Sigmoid colon (tissue), 7 donors: ENCODE measurements at regions of chr2 and their contacts with region 1.

Region 1: GRCh38 chr2:18749912-18750526 is 160.7 kb upstream of the NT5C1B start:
- DNase-seq: peak; percentile 77
- H3K4me3 ChIP-seq: no peak overlapping the region
- H3K27ac ChIP-seq: no peak overlapping the region
- H3K4me1 ChIP-seq: peaks cover 0 to 11% (median 5%) of the 10 kb centered on the region in 4 donors
- H3K27me3 ChIP-seq: no peaks in the 10 kb centered on the region
- CTCF ChIP-seq: peak; percentile 53 to 84 (median 72)
- EP300 ChIP-seq: no peak
- POLR2A ChIP-seq: no peak

Region 2: DNA sequence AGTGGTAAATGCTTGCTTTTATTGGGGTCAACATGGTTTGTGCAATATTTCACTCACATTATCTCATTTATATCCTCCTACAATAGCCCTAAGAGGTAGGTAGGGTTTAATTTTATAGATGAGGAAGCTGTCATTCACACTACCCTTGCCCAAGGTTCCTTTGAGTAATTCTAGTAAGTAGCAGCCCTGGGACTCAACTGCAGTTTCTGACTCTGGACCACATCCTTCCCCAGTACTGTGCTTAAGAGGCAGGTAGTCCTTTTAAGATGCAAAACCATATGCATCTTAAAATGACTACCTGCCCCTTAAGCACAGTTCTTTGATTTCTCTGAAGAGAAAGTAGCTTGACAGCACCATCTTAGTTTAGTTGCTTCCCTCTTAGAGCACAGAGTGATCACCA is 144.9 kb before region 1 on chr2:
- intact Hi-C with region 1: no loop called
- DNase-seq: no peak
- H3K4me3 ChIP-seq: no peak overlapping the region
- H3K27ac ChIP-seq: no peak overlapping the region
- H3K4me1 ChIP-seq: peaks cover 0 to 12% (median 10%) of the 10 kb centered on the region in 4 donors
- H3K27me3 ChIP-seq: no peaks in the 10 kb centered on the region
- CTCF ChIP-seq: no peak
- EP300 ChIP-seq: no peak
- POLR2A ChIP-seq: no peak

Region 3: DNA sequence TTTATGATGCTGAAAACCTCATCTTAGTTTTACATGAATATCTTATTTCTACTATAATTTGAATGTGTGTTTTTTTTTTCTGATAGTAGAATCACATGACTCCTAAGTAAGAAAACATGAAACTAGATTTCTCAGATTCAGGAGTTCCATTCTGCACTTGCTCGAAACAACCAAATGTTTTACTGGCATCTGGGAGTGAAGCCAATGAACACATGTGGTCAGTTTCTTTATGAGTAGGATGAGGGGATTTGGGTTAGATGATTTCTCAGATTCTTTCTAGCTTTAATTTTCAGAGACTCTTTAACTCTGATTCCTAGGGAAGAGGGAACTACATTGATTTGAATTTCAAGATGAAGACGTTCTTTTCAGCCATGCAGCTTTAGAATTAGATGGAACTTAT is 64.4 kb after region 1 on chr2:
- intact Hi-C with region 1: no loop called
- DNase-seq: no peak
- H3K4me3 ChIP-seq: no peak overlapping the region
- H3K27ac ChIP-seq: no peak overlapping the region
- H3K4me1 ChIP-seq: no peaks in the 10 kb centered on the region
- H3K27me3 ChIP-seq: no peaks in the 10 kb centered on the region
- CTCF ChIP-seq: no peak
- EP300 ChIP-seq: no peak
- POLR2A ChIP-seq: no peak

Region 4: DNA sequence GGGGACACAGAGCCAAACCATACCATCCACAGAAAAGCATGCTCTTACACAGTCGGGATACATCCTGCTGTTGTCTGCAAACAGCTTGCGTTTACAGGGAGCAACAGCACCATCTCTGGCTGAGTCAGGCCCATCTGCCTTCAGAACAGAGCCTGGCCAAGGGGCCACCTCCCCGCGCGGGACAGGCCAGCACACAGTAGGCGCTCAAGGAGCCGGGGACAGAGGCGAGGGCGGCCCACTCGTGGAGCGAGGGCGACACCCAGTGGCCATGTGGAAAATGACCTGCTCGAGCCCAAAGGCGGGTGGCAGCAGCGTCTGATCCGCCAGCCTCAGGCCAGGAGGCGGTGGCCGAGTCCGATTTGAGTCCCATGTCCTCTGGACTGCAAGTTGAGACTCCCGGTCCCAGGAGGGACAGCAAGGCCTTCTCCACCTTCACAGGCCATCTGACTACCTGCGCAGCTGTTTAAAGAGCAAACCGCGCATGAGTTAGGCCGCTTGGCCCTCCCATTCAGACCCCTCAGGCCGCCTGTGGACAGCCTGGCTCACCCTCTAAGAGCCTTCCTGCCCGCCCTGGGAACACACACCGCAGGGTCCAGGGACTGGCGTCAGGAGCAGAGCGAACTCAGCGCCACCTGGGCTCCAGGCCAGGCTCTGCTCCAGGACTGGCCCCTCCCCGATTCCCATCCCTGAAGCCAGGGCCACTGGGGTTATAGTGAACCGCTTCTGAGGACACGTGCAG is 1113.5 kb after region 1 on chr2:
- intact Hi-C with region 1: loop called (anchors 2 kb)
- DNase-seq: peak; percentile 82
- H3K4me3 ChIP-seq: peak overlapping the region in 1 of 4 donors; percentile 5
- H3K27ac ChIP-seq: no peak overlapping the region
- H3K4me1 ChIP-seq: peaks cover 0 to 23% (median 9%) of the 10 kb centered on the region in 4 donors
- H3K27me3 ChIP-seq: peaks cover 0 to 8% (median 0%) of the 10 kb centered on the region in 3 donors
- CTCF ChIP-seq: peak; percentile 93 to 98 (median 96)
- EP300 ChIP-seq: no peak
- POLR2A ChIP-seq: no peak